HEK293 (cell line): ENCODE measurements at regions of chr19 and their contacts with region 1.

Region 1: GRCh38 chr19:41641879-41642485 is 15.1 kb upstream of the CEACAM4 start:
- H3K4me3 ChIP-seq: no peak overlapping the region
- H3K27ac ChIP-seq: no peak overlapping the region
- H3K4me1 ChIP-seq: no peaks in the 10 kb centered on the region
- CTCF ChIP-seq: peak; percentile 75

Region 2: GRCh38 chr19:41462497-41462896 is 179.5 kb before region 1 on chr19:
- CTCF ChIA-PET with region 1: no interaction called
- POLR2A ChIA-PET with region 1: no interaction called
- H3K4me3 ChIP-seq: no peak overlapping the region
- H3K27ac ChIP-seq: no peak overlapping the region
- H3K4me1 ChIP-seq: no peaks in the 10 kb centered on the region
- CTCF ChIP-seq: no peak

Region 3: GRCh38 chr19:41591951-41592562 is 49.9 kb before region 1 on chr19:
- CTCF ChIA-PET with region 1: interaction called, 13 read pairs
- POLR2A ChIA-PET with region 1: no interaction called
- H3K4me3 ChIP-seq: no peak overlapping the region
- H3K27ac ChIP-seq: no peak overlapping the region
- H3K4me1 ChIP-seq: 0 out of 2 replicates have a peak, but pooled peaks cover 2% of the 10 kb centered on the region
- CTCF ChIP-seq: no peak

Region 4: DNA sequence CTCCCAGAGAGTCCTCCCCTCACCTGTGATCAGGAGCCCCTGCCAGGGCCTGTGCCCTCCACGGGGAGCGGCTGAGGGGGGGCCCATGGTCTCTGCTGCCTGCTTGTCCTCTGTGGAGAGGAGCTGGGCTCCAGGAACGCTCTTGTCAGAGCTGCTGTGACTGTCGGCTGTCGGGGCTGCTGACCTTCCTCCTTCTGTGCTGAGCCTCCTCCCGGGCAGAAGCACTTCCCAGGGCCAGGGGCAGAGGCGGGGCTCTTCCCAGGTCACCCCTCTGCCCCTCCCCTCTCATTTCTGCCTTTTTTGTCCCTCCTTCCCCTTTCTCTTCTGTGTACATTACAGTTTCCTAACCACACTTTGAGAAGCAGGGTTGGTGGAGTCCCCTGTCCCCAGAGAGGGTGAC is 15.1 kb before region 1 on chr19 and contains the start of gene CEACAM4:
- CTCF ChIA-PET with region 1: interaction called, 12 read pairs
- POLR2A ChIA-PET with region 1: no interaction called
- H3K4me3 ChIP-seq: no peak within 1 kb of the TSS
- H3K27ac ChIP-seq: no peak within 1 kb of the TSS
- H3K4me1 ChIP-seq: no peaks in the 10 kb centered on the region
- CTCF ChIP-seq: no peak

Region 5: GRCh38 chr19:41666075-41666474 is 24.1 kb after region 1 on chr19:
- CTCF ChIA-PET with region 1: interaction called, 14 read pairs
- POLR2A ChIA-PET with region 1: no interaction called
- H3K4me3 ChIP-seq: no peak overlapping the region
- H3K27ac ChIP-seq: no peak overlapping the region
- H3K4me1 ChIP-seq: no peaks in the 10 kb centered on the region
- CTCF ChIP-seq: no peak

Region 6: DNA sequence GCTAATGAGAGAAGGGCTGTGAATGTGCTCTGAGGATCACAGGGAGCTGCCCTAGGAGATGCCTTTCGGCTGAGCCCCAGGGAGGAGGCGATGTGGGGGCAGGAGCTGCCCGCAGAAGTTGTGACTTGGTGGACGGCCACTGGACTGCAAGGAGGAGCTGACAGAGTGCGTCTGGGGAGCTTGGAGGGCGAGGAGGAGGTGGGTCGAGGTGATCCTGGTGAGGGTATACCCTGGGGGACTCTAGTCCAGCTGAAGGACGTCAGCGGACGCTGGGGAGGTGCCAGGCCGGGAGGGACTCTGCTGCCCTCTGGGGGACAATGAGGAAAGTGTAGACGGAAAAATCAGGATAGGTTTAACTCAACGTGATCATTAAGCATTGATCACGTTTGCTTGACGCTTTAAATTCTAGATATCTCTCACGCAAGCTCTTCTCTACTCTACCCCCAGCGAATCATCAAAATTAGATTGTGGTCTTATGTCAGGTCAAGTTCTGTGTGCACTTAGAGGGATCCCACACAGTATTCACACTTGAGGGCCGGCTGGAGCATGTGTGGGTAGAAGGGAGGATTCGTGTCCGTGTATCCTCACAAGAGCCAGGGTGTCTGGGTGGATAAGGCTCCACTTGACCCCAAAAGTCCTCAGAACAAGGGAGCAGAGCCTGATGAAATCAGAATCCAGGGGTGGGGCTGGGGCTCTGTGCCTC is 49.4 kb after region 1 on chr19:
- CTCF ChIA-PET with region 1: interaction called, 96 read pairs
- POLR2A ChIA-PET with region 1: no interaction called
- H3K4me3 ChIP-seq: no peak overlapping the region
- H3K27ac ChIP-seq: no peak overlapping the region
- H3K4me1 ChIP-seq: no peaks in the 10 kb centered on the region
- CTCF ChIP-seq: peak; percentile 79

Region 7: GRCh38 chr19:41746593-41747227 is 104.7 kb after region 1 on chr19:
- CTCF ChIA-PET with region 1: interaction called, 48 read pairs
- POLR2A ChIA-PET with region 1: no interaction called
- H3K4me3 ChIP-seq: no peak overlapping the region
- H3K27ac ChIP-seq: no peak overlapping the region
- H3K4me1 ChIP-seq: peaks cover 8% of the 10 kb centered on the region; the same call in 1 of the 2 replicates
- CTCF ChIP-seq: peak; percentile 47

Region 8: DNA sequence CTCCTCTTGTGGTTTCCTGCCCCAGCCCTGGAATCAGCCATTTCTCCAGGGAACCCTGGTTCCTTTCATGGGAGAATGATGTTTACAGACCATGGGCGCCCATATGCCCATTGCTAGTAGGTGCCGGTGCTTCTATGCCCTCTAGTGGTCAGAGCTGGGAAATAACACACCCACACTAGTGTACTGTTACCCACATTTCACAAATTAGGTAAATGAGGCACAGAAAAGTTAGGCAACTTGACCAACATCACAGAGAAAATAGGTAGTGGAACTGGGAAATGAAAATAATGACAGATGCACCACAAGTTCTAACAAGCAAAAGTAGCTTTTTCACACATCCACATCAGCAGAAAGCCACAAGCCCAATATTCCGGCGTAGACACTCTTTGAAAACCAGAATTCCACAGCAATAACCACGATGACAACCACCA is 153.1 kb after region 1 on chr19:
- CTCF ChIA-PET with region 1: interaction called, 13 read pairs
- POLR2A ChIA-PET with region 1: no interaction called
- H3K4me3 ChIP-seq: no peak overlapping the region
- H3K27ac ChIP-seq: no peak overlapping the region
- H3K4me1 ChIP-seq: no peaks in the 10 kb centered on the region
- CTCF ChIP-seq: peak; percentile 79